Tibial artery (tissue), 4 donors: ENCODE measurements at regions of chr4 and their contacts with region 1.

Region 1: DNA sequence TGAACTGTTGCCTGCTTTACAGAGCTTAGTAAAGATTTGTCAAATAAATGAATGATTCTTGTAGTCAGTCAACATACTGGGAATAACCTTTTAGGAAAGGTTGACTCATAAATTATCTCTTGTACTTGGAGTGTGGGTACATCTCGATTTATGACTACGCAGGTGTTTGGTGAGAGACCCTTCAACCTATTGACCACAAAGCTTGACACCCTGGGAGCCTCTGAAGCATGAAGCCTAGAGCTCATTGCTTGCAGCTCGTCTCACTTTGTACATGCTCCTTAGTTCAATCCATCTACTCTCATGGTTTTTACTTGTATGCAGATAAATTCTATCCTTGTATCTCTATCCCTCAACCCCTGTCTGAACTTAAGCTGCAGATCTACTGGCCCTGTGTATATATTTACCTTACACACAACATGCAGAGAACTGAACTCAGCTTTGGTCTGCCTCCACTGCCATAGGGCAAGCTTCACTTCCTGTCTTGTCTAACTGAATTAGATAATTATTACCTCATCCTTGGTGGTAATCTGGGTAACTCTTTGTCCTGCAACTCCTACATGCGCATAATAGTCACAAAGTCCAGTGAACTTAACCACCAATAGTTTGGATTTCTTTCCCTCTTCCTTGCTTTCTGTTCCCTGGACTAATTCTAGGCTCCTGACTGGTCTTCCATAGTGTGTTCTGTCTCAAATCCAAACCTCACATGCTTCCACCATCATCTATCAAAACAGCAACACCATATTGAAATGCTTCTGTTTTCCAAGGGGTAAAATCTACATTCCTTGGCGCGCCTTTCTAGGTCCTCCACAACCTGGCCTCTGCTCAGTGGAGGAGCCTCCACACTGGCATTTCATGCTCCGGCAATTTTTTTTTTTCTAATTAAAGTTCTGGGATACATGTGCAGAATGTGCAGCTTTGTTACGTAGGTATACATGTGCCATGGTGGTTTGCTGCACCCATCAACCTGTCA is 32.2 kb upstream of the FAT1 start:
- DNase-seq: no peak
- H3K4me3 ChIP-seq: no peak overlapping the region
- H3K27ac ChIP-seq: no peak overlapping the region
- H3K4me1 ChIP-seq: no peaks in the 10 kb centered on the region
- H3K27me3 ChIP-seq: no peaks in the 10 kb centered on the region
- CTCF ChIP-seq: no peak

Region 2: DNA sequence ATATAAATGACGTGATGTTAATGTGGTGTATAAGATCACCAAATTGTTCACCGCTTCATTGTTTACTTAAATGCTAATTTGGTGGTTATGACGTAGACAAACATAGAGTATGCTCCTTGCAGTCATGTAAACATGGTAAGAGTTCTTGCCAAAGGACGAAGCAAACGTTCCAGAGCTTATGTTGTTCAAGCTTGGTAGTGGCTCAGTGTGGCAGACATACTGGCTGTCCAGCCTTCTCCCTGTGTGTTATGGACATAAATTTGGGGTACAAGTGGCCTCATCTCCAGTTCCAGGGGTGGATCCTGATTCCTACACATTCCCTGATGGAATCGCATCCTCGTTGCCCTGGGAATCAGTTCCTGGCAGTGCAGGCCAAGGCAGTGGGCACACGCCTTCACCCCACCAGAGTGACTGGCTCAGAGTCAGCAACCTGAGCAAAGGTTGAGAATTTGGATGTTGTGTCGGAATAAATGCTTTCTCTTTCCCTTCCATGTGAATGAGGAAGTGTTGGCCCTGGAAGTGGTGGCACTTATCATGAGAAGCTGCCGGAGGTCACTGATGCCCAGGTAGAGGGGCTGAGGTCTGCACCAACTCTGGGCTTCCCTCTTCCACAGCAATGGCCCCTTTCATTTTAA is 464.5 kb before region 1 on chr4:
- intact Hi-C with region 1: no loop called
- DNase-seq: no peak
- H3K4me3 ChIP-seq: no peak overlapping the region
- H3K27ac ChIP-seq: no peak overlapping the region
- H3K4me1 ChIP-seq: no peaks in the 10 kb centered on the region
- H3K27me3 ChIP-seq: no peaks in the 10 kb centered on the region
- CTCF ChIP-seq: no peak

Region 3: GRCh38 chr4:186481998-186482790 is 273.6 kb before region 1 on chr4:
- intact Hi-C with region 1: no loop called
- DNase-seq: no peak
- H3K4me3 ChIP-seq: no peak overlapping the region
- H3K27ac ChIP-seq: no peak overlapping the region
- H3K4me1 ChIP-seq: peaks cover 0 to 18% (median 9%) of the 10 kb centered on the region in 4 donors
- H3K27me3 ChIP-seq: no peaks in the 10 kb centered on the region
- CTCF ChIP-seq: no peak

Region 4: GRCh38 chr4:186881521-186882220 is 125.8 kb after region 1 on chr4:
- intact Hi-C with region 1: loop called (anchors 10 kb)
- DNase-seq: no peak
- H3K4me3 ChIP-seq: no peak overlapping the region
- H3K27ac ChIP-seq: no peak overlapping the region
- H3K4me1 ChIP-seq: no peaks in the 10 kb centered on the region
- H3K27me3 ChIP-seq: no peaks in the 10 kb centered on the region
- CTCF ChIP-seq: no peak